ENCODE measurements at regions of chr15 and their contacts with region 1.

Region 1: DNA sequence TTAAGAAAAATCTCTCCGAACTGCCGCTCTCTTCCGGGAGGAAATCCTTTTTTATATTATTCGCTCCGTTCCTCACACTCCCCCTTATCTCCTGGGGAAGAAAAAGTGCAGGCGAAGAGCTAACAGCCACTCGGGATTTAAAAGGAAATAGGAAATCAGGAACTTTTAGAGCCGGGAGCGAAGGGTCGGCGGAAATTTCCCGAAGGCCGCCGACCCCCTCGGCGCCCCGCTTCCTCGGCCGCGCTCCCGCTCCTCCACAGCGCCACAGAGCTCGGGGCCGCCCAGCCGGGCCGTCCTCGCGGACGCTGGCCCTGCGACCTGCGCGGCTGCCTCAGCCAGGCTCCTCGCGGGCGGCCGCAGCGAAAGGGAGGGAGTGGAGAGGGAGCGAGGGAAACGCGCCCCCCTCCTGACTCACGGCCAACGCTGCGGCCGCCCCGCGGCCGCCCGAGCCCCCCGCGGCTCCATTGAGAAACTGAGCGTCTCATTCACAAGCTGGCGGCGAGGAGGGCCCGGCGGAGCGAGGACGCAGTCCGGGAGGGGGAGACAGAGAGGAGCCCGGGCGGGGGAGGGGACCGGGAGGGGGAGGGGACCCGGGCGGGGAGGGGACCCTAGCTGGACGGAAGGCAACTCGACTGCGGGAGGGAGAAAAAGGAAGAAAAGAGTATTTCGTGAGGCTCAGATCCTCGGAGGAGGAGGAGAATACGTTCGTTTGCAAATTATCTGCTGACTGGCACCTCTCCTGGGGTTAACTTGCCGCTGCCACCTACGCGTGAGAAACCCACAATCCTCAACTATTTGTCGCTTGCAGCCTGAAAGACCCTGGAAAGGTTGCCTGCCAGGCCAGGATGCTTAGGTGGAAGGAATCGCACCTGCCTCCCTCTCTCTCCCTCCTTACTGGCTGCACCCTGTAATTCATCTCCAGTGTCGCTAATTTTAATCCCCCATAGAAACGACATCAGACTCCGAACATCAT is at the start of gene PTPN9:
- DNase-seq: peak in 1 of 2 experiments; percentile 53
- H3K4me3 ChIP-seq: peak within 1 kb of the TSS; percentile 96
- H3K27ac ChIP-seq: peak within 1 kb of the TSS; percentile 26; the same call in 1 of the 2 replicates
- H3K4me1 ChIP-seq: peaks cover 13% of the 10 kb centered on the region
- H3K27me3 ChIP-seq: no peaks in the 10 kb centered on the region
- CTCF ChIP-seq: peak; percentile 41; the same call in 1 of the 2 replicates
- total RNA-seq, gene PTPN9: 22.4 and 24.1 TPM in 2 replicates

Region 2: GRCh38 chr15:75508840-75509532 is 70.2 kb before region 1 on chr15:
- CTCF ChIA-PET with region 1: interaction called, 10 read pairs
- POLR2A ChIA-PET with region 1: no interaction called
- intact Hi-C with region 1: no loop called
- DNase-seq: peak in 1 of 2 experiments; percentile 10
- H3K4me3 ChIP-seq: no peak overlapping the region
- H3K27ac ChIP-seq: no peak overlapping the region
- H3K4me1 ChIP-seq: no peaks in the 10 kb centered on the region
- H3K27me3 ChIP-seq: no peaks in the 10 kb centered on the region
- CTCF ChIP-seq: peak; percentile 67

Region 3: GRCh38 chr15:75532413-75533147 is 46.7 kb before region 1 on chr15:
- CTCF ChIA-PET with region 1: no interaction called
- POLR2A ChIA-PET with region 1: interaction called, 26 read pairs
- intact Hi-C with region 1: no loop called
- DNase-seq: peak; percentile 36 to 59
- H3K4me3 ChIP-seq: peak overlapping the region; percentile 2; the same call in 1 of the 2 replicates
- H3K27ac ChIP-seq: peak overlapping the region; percentile 68
- H3K4me1 ChIP-seq: peaks cover 32% of the 10 kb centered on the region
- H3K27me3 ChIP-seq: no peaks in the 10 kb centered on the region
- CTCF ChIP-seq: peak; percentile 66

Measured in PC-9 (cell line).